ENCODE measurements at regions of chr10 and their contacts with region 1.

Region 1: GRCh38 chr10:32055813-32056600 is at the start of gene KIF5B:
- DNase-seq: peak; percentile 83
- H3K4me3 Mint-ChIP-seq: peak within 1 kb of the TSS; percentile 98
- H3K27ac Mint-ChIP-seq: peak within 1 kb of the TSS; percentile 90
- H3K4me1 Mint-ChIP-seq: no peaks in the 10 kb centered on the region
- H3K27me3 Mint-ChIP-seq: no peaks in the 10 kb centered on the region
- CTCF ChIP-seq: no peak
- total RNA-seq, gene KIF5B: 150 and 187 TPM in 2 replicates

Region 2: GRCh38 chr10:31770307-31770902 is 285.6 kb before region 1 on chr10:
- CTCF ChIA-PET with region 1: no interaction called
- POLR2A ChIA-PET with region 1: no interaction called
- intact Hi-C with region 1: no loop called
- DNase-seq: peak; percentile 24
- H3K4me3 Mint-ChIP-seq: no peak overlapping the region
- H3K27ac Mint-ChIP-seq: no peak overlapping the region
- H3K4me1 Mint-ChIP-seq: peaks cover 11% of the 10 kb centered on the region
- H3K27me3 Mint-ChIP-seq: no peaks in the 10 kb centered on the region
- CTCF ChIP-seq: peak; percentile 41

Region 3: DNA sequence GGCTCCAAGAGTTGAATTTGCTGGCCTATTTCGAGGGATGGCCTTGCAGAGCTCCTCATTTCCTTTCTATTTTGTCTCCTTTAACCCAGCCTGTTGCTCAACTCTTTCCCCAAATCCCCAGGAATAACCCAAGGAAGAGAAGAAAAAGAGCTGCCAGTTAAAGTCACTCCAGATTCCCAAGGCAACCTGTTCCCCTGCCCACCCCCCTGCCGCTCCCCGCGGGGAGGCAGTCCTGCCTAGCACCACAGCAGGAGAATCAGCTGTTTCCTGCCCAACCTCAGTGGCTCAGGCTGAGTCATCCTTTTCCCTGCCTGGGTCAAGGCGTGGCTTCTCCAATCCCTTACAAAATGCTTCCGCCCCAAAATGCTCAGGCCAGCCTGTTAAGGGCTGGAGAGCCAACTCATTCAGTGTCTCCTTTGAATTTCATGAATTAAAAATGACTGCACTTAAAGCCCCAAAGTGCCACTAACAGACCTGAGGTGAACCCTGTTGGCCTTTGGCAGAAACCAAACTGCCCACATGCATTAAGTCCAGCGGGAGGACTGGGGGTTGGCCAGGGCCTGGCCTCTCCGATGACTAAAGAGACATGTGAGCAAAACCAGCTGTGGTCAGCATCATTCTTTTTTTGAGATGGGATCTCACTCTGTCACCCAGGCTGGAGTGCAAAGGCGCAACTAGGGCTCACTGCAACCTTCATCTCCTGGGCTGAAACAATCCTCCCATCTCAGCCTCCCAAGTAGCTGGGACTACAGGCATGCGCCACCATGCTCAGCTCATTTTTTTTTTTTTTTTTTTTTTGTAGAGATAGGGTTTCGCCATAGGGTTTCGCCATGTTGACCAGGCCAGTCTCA is 83.4 kb after region 1 on chr10:
- CTCF ChIA-PET with region 1: interaction called, 3 read pairs
- POLR2A ChIA-PET with region 1: interaction called, 6 read pairs
- intact Hi-C with region 1: loop called (anchors 2 kb)
- DNase-seq: peak; percentile 97
- H3K4me3 Mint-ChIP-seq: peak overlapping the region; percentile 15
- H3K27ac Mint-ChIP-seq: no peak overlapping the region
- H3K4me1 Mint-ChIP-seq: peaks cover 18% of the 10 kb centered on the region
- H3K27me3 Mint-ChIP-seq: no peaks in the 10 kb centered on the region
- CTCF ChIP-seq: peak; percentile 23

Region 4: GRCh38 chr10:32149252-32149955 is 93.4 kb after region 1 on chr10:
- CTCF ChIA-PET with region 1: interaction called, 3 read pairs
- POLR2A ChIA-PET with region 1: interaction called, 9 read pairs
- intact Hi-C with region 1: loop called (anchors 2 kb)
- DNase-seq: peak; percentile 92
- H3K4me3 Mint-ChIP-seq: peak overlapping the region; percentile 9
- H3K27ac Mint-ChIP-seq: peak overlapping the region; percentile 97
- H3K4me1 Mint-ChIP-seq: peaks cover 14% of the 10 kb centered on the region
- H3K27me3 Mint-ChIP-seq: no peaks in the 10 kb centered on the region
- CTCF ChIP-seq: no peak

Region 5: DNA sequence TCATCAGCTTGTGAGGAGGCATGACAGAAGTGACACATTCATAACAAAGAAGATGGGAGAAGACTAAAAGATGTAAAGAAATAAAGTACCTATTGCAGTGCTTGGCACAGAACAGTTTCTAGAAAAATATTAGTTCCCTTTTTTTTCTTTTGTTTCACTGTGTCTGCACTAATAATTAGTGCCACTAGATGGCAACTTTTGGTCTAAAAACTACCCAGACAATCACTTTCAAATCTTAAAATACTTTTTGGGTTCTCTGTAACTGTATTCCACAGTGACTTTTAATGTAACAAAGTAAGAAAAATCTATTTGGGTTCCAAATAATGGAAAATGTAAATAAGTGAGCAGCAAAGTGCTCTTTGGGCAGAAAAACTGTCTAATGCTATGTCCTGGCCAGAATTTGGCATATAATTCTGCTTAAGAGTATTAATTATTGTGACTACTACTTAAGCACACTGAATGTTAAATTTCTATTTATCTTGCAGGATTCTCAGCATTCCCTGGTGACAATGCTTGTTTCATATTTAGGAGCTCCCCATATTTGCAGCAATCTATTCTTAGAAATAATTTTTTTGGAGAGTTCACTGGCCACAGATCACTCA is 135.0 kb after region 1 on chr10:
- CTCF ChIA-PET with region 1: no interaction called
- POLR2A ChIA-PET with region 1: no interaction called
- intact Hi-C with region 1: loop called (anchors 5 kb)
- DNase-seq: peak; percentile 56
- H3K4me3 Mint-ChIP-seq: no peak overlapping the region
- H3K27ac Mint-ChIP-seq: no peak overlapping the region
- H3K4me1 Mint-ChIP-seq: peaks cover 5% of the 10 kb centered on the region
- H3K27me3 Mint-ChIP-seq: no peaks in the 10 kb centered on the region
- CTCF ChIP-seq: peak; percentile 42

Measured in MCF 10A (cell line).